Endothelial cell of umbilical vein (primary cell): ENCODE measurements at regions of chr6 and their contacts with region 1.

Region 1: GRCh38 chr6:135630789-135631376 is 133.3 kb upstream of the AHI1 start:
- DNase-seq: peak; percentile 91
- H3K4me3 ChIP-seq: no peak overlapping the region
- H3K27ac ChIP-seq: peak overlapping the region; percentile 80
- H3K4me1 ChIP-seq: peaks cover 21% of the 10 kb centered on the region
- H3K27me3 ChIP-seq: no peaks in the 10 kb centered on the region
- CTCF ChIP-seq: no peak
- POLR2A ChIP-seq: no peak

Region 2: DNA sequence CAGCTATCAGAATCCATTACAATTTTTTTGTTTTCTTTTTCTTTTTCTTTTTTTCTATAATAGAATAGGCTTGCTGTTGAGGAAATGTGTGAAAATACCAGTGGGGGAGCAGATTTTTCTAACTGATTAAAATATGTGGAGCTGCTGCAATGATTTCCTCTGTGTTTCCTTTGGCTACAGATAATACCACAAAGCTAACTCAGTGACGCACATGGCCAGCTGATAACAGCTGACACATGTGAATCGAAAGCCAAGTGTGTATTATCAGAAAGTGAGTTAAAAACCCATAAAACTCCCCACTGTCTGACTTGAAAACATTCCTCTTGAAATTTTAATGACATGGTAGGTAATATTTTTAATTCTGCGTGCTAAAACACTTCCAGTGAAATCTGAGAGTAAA is 62.5 kb before region 1 on chr6:
- CTCF ChIA-PET with region 1: no interaction called
- POLR2A ChIA-PET with region 1: no interaction called
- dilution Hi-C with region 1: no loop called
- intact Hi-C with region 1: loop called (anchors 2 kb)
- DNase-seq: peak; percentile 93
- H3K4me3 ChIP-seq: no peak overlapping the region
- H3K27ac ChIP-seq: no peak overlapping the region
- H3K4me1 ChIP-seq: peaks cover 9% of the 10 kb centered on the region
- H3K27me3 ChIP-seq: no peaks in the 10 kb centered on the region
- CTCF ChIP-seq: no peak
- POLR2A ChIP-seq: no peak

Region 3: DNA sequence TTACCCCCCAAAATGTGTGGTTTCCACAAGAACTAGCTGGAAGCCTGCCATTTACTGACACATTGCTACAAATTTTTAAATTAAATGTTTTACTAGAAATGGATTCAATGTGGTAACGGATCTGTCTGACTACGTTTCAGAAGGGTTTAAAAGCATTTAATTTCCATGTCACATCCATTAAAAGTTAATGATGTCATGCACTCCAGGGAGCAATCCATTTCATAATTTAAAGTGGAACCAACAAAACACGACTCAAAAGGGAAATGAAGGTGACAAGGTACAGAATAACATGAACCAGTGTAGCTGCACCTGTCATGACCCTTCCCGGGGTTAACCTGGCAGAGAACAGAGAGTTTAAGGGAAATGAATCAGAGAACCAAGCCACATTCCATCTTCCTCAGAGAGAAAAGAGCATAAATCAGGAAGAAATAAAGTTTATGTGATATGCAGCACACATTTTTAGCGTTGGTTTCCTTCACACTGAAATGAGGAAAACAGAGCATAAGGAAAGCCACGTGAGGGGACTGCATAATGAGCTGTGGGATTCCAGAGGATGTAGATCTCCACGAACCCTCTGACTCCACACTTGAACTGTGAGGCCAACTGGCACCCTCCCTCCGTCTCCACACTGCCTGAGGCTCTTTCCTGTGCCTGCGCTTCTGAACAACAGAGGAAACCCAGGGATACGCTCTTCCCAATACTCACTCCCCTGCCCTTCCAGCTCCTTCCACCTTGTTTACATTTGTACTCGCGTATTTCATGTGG is 37.0 kb after region 1 on chr6:
- CTCF ChIA-PET with region 1: no interaction called
- POLR2A ChIA-PET with region 1: no interaction called
- dilution Hi-C with region 1: no loop called
- intact Hi-C with region 1: loop called (anchors 5 kb)
- DNase-seq: peak; percentile 83
- H3K4me3 ChIP-seq: peak overlapping the region in 1 of 3 experiments; percentile 58
- H3K27ac ChIP-seq: peak overlapping the region; percentile 24
- H3K4me1 ChIP-seq: peaks cover 11% of the 10 kb centered on the region
- H3K27me3 ChIP-seq: no peaks in the 10 kb centered on the region
- CTCF ChIP-seq: no peak
- POLR2A ChIP-seq: no peak